Naive thymus-derived CD4-positive, alpha-beta T cell (primary cell): ENCODE measurements at regions of chr12 and their contacts with region 1.

Region 1: DNA sequence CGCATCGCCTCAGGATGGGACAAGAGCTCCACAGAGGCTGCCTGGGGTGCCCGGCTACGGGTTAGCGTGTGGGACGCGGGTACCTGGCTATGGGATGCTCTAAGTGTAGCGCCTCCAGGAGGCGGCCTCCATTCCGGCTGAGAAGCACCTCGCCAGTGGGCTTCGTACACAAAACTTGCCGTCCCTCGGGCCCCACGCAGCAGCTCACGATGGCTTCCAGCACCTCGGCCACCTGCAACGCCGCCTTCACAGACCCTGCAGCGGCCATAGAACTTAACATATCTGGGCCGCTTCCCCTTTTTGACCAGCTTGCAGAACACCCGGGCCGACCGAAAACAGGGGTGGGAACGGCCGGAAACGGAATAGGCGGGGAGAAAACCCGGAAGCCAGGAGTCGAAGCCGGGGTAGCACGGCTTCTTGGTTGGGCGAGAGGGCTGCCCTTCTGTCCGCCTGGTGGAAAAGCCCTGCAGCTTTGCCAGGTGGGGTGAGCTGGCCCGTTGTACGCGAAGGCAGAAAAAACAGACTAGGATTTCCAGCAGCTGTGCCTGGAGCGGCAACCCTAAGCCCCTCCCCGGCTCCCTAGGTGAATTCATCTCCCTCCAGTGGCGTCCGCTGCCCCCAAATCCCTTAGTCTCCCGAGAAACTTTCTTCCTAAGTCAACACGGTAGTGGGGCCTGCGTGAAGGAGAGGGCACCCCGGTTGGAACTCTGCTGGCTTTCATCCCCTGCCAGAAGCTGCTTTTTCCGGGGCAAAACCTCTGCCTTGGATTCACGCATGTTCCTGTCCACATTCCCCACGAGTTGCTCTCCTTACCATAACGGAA is at the start of gene BBS10:
- DNase-seq: peak; percentile 64 to 86 (median 84)
- ATAC-seq: peak; percentile 97
- H3K4me3 ChIP-seq: peak within 1 kb of the TSS; percentile 88
- H3K4me3 Mint-ChIP-seq: peak within 1 kb of the TSS; percentile 89 to 98 (median 96)
- H3K27ac ChIP-seq: peak within 1 kb of the TSS; percentile 79
- H3K27ac Mint-ChIP-seq: peak within 1 kb of the TSS; percentile 85 to 95 (median 93)
- H3K4me1 ChIP-seq: peaks cover 16 to 20% of the 10 kb centered on the region in 2 donors
- H3K4me1 Mint-ChIP-seq: peaks cover 15 to 48% (median 30%) of the 10 kb centered on the region in 7 donors
- H3K27me3 ChIP-seq: no peaks in the 10 kb centered on the region
- H3K27me3 Mint-ChIP-seq: no peaks in the 10 kb centered on the region
- total RNA-seq, gene BBS10: 2.5 to 11.5 (median 5.2) TPM

Region 2: GRCh38 chr12:74537707-74538385 is 1810.4 kb before region 1 on chr12 and contains the start of gene ATXN7L3B:
- CTCF ChIA-PET with region 1: no interaction called
- POLR2A ChIA-PET with region 1: no interaction called
- intact Hi-C with region 1: loop called (anchors 2 to 5 kb)
- DNase-seq: peak; percentile 94 to 98 (median 97)
- ATAC-seq: peak; percentile 97
- H3K4me3 ChIP-seq: peak within 1 kb of the TSS; percentile 85
- H3K4me3 Mint-ChIP-seq: peak within 1 kb of the TSS; percentile 87 to 99 (median 97)
- H3K27ac ChIP-seq: peak within 1 kb of the TSS; percentile 94
- H3K27ac Mint-ChIP-seq: peak within 1 kb of the TSS; percentile 96 to 100 (median 99)
- H3K4me1 ChIP-seq: peaks cover 27 to 32% of the 10 kb centered on the region in 2 donors
- H3K4me1 Mint-ChIP-seq: peaks cover 39 to 60% (median 54%) of the 10 kb centered on the region in 7 donors
- H3K27me3 ChIP-seq: no peaks in the 10 kb centered on the region
- H3K27me3 Mint-ChIP-seq: no peaks in the 10 kb centered on the region
- total RNA-seq, gene ATXN7L3B: 25.6 to 51.6 (median 46.9) TPM

Region 3: GRCh38 chr12:75334384-75335030 is 1013.8 kb before region 1 on chr12 and contains the start of gene GLIPR1L1:
- CTCF ChIA-PET with region 1: no interaction called
- POLR2A ChIA-PET with region 1: no interaction called
- intact Hi-C with region 1: loop called in 1 of 2 experiments (anchors 5 kb)
- DNase-seq: peak; percentile 58 to 79 (median 74)
- ATAC-seq: peak; percentile 91
- H3K4me3 ChIP-seq: no peak within 1 kb of the TSS
- H3K4me3 Mint-ChIP-seq: peak within 1 kb of the TSS; percentile 18 to 80 (median 74)
- H3K27ac ChIP-seq: no peak within 1 kb of the TSS
- H3K27ac Mint-ChIP-seq: peak within 1 kb of the TSS in 1 of 9 donors; percentile 3
- H3K4me1 ChIP-seq: peaks cover 0 to 5% of the 10 kb centered on the region in 2 donors
- H3K4me1 Mint-ChIP-seq: peaks cover 11 to 29% (median 18%) of the 10 kb centered on the region in 7 donors
- H3K27me3 ChIP-seq: peaks cover 0 to 6% of the 10 kb centered on the region in 2 donors
- H3K27me3 Mint-ChIP-seq: peaks cover 16 to 56% (median 31%) of the 10 kb centered on the region in 5 donors
- total RNA-seq, gene GLIPR1L1: not detected

Region 4: DNA sequence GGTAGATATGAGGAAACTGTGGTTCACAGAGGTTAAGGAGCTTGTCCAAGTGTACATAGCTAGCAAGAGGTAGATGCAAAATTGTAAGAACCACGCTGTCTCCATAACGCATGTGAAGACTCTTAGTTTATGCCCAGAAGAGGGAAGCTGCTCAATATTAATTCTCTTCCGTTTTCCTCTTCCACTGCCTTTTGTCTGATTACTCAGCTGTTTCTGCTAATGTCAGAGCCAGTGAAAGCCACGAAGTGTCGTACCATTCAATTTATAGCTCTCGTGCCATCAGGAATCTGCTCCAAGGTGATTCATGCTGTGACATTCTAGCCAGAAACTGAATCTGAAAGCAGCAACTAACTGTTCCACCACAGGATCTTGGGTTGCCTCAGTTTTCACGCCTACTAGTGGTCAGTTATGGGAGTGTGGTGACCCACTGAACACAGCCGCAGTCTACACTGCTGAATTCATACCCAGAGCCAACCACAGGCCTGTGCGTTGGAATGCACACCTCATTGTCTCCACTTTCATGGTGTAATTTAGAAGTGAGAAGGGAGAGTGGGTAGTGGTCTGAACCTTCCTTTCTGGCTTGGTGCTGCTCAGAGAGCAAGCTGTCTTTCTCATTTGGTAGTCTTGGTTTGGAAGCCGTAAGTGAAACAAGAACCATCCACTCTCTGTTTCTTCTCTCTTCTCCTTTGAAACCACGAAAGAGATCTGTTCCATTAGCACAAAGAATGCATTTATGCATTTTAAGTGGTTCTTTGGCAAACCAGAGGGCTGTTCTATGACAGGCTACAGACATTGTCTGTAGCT is 189.6 kb before region 1 on chr12:
- CTCF ChIA-PET with region 1: no interaction called
- POLR2A ChIA-PET with region 1: interaction called, 3 read pairs
- intact Hi-C with region 1: loop called (anchors 5 to 10 kb)
- DNase-seq: peak; percentile 9 to 88 (median 37)
- ATAC-seq: peak; percentile 95
- H3K4me3 ChIP-seq: no peak overlapping the region
- H3K4me3 Mint-ChIP-seq: peak overlapping the region; percentile 0 to 88 (median 69)
- H3K27ac ChIP-seq: no peak overlapping the region
- H3K27ac Mint-ChIP-seq: peak overlapping the region in 4 of 9 donors; percentile 54 to 80 (median 68)
- H3K4me1 ChIP-seq: no peaks in the 10 kb centered on the region
- H3K4me1 Mint-ChIP-seq: peaks cover 0 to 18% (median 10%) of the 10 kb centered on the region in 7 donors
- H3K27me3 ChIP-seq: no peaks in the 10 kb centered on the region
- H3K27me3 Mint-ChIP-seq: peaks cover 0 to 3% (median 0%) of the 10 kb centered on the region in 5 donors

Region 5: DNA sequence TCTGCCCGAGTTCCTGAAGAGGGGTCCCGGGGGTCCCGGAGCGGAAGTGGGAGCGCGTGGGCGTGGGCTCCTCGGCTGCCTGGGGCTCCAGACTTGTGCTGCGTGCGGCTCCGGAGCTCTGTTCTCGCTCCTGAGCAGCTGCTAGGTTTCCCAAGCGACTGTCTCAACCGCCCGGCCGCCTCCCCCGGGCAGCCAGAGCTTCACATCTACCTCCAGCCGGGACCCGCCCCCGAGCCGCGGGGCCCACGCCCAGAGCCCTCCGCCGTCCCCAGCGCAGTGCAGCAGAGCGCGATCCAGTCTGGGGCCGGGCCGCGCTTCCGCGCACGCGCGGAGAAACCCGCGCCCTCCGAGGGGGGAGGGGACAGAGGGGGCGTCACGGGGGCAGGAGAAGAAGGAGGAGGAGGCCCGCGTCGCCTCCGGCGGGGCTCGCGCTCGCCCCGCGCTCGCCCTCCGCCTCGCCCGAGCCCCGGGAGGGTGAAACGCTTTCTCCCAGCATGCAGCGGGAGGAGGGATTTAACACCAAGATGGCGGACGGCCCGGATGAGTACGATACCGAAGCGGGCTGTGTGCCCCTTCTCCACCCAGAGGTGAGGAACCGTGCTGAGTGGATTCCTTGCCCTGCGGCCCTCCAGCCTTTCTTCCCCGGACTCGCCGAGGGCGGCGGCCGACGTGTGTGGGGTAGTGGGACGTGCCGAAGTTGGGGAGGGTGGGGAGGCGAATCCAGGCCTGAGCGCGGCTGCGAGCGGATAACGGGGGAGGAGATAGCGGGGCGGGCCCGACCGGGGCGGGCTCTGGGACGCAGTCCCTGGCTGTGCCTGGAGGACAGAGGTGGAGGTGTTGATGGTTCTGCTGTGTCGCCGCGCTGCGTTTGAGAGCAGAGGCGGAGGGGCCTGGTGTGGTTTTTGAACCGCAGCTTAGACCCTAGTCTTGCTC is 415.7 kb after region 1 on chr12 and contains the start of gene ZDHHC17:
- CTCF ChIA-PET with region 1: no interaction called
- POLR2A ChIA-PET with region 1: interaction called, 9 read pairs
- intact Hi-C with region 1: loop called (anchors 1 to 2 kb)
- DNase-seq: peak; percentile 90 to 95 (median 93)
- ATAC-seq: peak; percentile 90
- H3K4me3 ChIP-seq: peak within 1 kb of the TSS; percentile 84
- H3K4me3 Mint-ChIP-seq: peak within 1 kb of the TSS; percentile 92 to 98 (median 97)
- H3K27ac ChIP-seq: peak within 1 kb of the TSS; percentile 94
- H3K27ac Mint-ChIP-seq: peak within 1 kb of the TSS; percentile 95 to 99 (median 97)
- H3K4me1 ChIP-seq: peaks cover 8 to 13% of the 10 kb centered on the region in 2 donors
- H3K4me1 Mint-ChIP-seq: peaks cover 17 to 57% (median 46%) of the 10 kb centered on the region in 7 donors
- H3K27me3 ChIP-seq: no peaks in the 10 kb centered on the region
- H3K27me3 Mint-ChIP-seq: peaks cover 0 to 13% (median 0%) of the 10 kb centered on the region in 5 donors
- total RNA-seq, gene ZDHHC17: 27.3 to 60.9 (median 56.3) TPM